ENCODE measurements at regions of chr20 and their contacts with region 1.

Region 1: DNA sequence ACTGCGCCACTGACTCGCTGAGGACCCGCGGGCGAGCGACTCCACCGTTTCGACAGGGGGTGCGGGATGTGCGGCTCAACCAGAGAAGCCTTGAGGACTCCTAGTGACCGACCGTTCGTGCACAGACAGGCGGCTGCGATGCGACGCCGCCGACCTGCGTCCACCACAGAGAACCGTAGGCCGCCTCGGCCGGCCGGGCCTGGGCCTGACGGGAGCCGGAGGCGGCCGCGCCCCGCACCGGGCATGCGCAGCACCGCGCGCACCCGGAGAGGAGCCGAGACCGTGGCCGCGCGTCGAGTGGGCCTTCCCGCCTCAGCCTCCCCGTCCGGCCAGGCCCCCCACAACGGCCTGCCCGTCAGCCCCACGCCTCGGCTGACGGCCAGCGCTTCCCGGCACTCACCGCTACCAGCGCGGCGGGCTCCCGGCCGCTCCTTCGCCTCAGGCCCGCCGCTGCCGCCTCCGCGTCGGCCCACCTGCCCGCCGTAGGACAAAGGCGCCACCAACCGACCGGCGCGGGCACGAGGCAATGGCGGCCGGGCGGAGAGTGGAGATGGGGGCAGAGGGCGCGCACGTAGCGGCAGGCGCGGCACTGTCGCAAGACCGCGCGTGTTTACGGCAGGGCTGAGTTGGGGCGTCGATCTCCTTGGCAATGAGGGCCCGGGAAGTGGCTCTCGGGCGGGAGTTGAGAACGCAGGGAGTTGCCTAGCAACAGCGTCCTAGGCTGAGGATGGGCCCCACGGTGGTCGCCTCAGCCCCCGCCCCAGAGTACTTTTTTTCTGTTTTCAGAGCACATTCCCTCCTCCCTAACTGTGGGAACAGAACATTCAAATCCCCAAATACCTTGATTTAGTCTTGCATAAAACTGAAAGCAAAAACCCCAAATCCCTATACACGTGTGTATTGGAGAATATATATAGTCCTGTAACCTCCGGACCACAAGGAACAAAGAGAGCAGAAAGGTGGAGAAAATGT is at the start of gene NCOA5:
- DNase-seq: peak; percentile 94
- H3K4me3 ChIP-seq: peak within 1 kb of the TSS; percentile 70 to 80 (median 77)
- H3K27ac ChIP-seq: peak within 1 kb of the TSS; percentile 83
- H3K4me1 ChIP-seq: peaks cover 26% of the 10 kb centered on the region
- H3K27me3 ChIP-seq: peaks cover 0 to 2% of the 10 kb centered on the region in 2 experiments
- CTCF ChIP-seq: peak in 1 of 2 donors; percentile 15
- POLR2A ChIP-seq: peak; percentile 85
- total RNA-seq, gene NCOA5: 34.2 and 39.5 TPM in 2 replicates

Region 2: GRCh38 chr20:45812157-45813020 is 277.3 kb before region 1 on chr20 and contains the start of gene UBE2C:
- CTCF ChIA-PET with region 1: no interaction called
- POLR2A ChIA-PET with region 1: no interaction called
- dilution Hi-C with region 1: no loop called
- intact Hi-C with region 1: loop called (anchors 10 kb)
- DNase-seq: peak; percentile 100
- H3K4me3 ChIP-seq: peak within 1 kb of the TSS; percentile 59 to 96 (median 90)
- H3K27ac ChIP-seq: peak within 1 kb of the TSS; percentile 41
- H3K4me1 ChIP-seq: peaks cover 16% of the 10 kb centered on the region
- H3K27me3 ChIP-seq: no peaks in the 10 kb centered on the region
- CTCF ChIP-seq: no peak
- POLR2A ChIP-seq: peak; percentile 50
- total RNA-seq, gene UBE2C: 108 and 129 TPM in 2 replicates

Region 3: DNA sequence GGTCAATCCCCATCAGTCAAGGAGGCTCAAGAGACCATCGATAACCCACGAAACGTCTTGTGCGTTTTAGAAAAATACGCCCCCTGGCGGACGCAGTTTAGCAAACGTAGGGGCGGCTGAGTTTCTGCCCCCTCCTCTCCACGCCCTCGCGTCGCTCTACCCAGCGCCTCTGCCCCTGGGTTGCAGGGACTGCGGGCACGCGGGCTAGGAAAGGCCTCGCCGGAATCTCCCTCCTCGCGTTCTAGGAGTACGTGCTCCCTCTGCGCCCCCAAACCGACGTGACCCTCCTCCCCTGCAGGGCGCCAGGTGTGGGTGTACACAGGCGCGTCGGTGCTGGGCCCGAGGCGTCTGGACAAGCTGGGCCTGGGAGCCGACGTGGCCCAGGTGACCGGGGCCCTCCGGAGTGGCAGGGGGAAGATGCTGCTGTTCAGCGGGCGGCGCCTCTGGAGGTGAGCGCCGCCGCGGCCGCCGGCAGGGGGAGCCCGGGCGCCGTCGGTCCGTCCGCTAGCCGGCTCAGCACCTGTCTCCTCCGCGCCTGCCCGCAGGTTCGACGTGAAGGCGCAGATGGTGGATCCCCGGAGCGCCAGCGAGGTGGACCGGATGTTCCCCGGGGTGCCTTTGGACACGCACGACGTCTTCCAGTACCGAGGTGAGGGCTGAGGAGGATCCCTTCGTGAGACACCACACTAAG is 75.7 kb before region 1 on chr20:
- CTCF ChIA-PET with region 1: interaction called, 24 read pairs
- POLR2A ChIA-PET with region 1: no interaction called
- dilution Hi-C with region 1: no loop called
- intact Hi-C with region 1: loop called (anchors 2 kb)
- DNase-seq: peak; percentile 31
- H3K4me3 ChIP-seq: no peak overlapping the region
- H3K27ac ChIP-seq: no peak overlapping the region
- H3K4me1 ChIP-seq: no peaks in the 10 kb centered on the region
- H3K27me3 ChIP-seq: peaks cover 39 to 46% of the 10 kb centered on the region in 2 experiments
- CTCF ChIP-seq: peak; percentile 74 to 85
- POLR2A ChIP-seq: no peak

Region 4: DNA sequence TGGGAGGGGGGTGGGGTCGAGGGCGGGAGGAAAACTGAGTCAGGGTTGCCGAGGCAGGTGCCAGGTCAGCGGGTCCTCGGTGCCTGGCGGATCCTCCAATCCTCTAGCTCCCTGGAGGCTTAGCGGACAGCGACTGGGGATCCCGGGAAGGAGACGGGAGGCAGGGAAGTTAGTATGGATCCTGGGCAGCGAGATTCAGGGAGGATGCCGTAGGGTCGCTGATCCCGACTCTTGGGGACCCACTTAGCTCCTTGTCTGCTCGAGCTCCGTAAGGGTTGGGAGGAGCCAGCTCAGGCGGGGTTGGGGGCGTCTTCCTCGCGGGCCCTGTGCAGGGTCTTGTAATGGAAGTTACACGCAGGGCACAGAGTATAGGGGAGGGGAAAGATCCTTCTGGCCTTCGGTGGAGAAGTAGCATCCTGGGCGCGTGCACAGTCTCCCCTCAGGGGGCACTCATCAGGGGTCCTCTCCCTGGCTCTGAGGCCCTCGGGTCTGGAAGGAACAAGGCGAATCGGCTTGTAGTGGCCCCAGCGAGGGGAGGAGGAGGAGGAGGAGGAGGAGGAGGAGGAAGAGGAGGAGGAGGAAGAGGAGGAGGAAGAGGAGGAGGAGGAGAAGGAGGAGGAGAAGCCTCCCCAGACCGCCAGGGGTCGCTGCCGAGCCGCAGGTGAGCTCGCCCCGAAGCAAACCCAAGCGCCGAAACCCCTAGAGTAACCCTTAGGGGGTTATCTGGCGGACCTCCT is 67.1 kb before region 1 on chr20:
- CTCF ChIA-PET with region 1: interaction called, 7 read pairs
- POLR2A ChIA-PET with region 1: no interaction called
- dilution Hi-C with region 1: no loop called
- intact Hi-C with region 1: loop called (anchors 1 kb)
- DNase-seq: no peak
- H3K4me3 ChIP-seq: no peak overlapping the region
- H3K27ac ChIP-seq: no peak overlapping the region
- H3K4me1 ChIP-seq: no peaks in the 10 kb centered on the region
- H3K27me3 ChIP-seq: peaks cover 10 to 22% of the 10 kb centered on the region in 2 experiments
- CTCF ChIP-seq: peak; percentile 53 to 77
- POLR2A ChIP-seq: no peak

Region 5: DNA sequence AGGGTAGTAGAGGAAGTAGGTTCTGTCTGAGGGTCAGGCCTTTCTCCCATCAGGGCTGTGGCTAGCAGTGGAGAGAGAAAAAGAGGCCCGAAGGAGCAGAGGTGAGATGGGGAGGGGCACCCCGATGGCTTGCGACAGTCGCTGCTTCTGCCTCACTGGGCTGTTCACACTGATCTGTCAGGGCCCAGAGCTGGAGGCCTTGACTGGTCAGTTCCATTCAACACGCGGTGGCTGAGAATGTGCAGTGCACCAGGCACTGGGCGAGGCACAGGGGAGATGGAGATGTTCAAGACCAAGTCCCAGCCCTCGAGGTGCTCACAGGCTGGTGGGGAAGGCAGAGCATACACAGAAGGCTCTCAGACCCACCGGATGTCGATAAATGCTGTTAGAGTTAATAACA is 39.3 kb before region 1 on chr20:
- CTCF ChIA-PET with region 1: no interaction called
- POLR2A ChIA-PET with region 1: no interaction called
- dilution Hi-C with region 1: no loop called
- intact Hi-C with region 1: no loop called
- DNase-seq: no peak
- H3K4me3 ChIP-seq: no peak overlapping the region
- H3K27ac ChIP-seq: no peak overlapping the region
- H3K4me1 ChIP-seq: no peaks in the 10 kb centered on the region
- H3K27me3 ChIP-seq: no peaks in the 10 kb centered on the region
- CTCF ChIP-seq: no peak
- POLR2A ChIP-seq: no peak

Region 6: GRCh38 chr20:46078954-46079353 is 10.7 kb before region 1 on chr20:
- CTCF ChIA-PET with region 1: interaction called, 10 read pairs
- POLR2A ChIA-PET with region 1: no interaction called
- dilution Hi-C with region 1: no loop called
- intact Hi-C with region 1: no loop called
- DNase-seq: no peak
- H3K4me3 ChIP-seq: no peak overlapping the region
- H3K27ac ChIP-seq: no peak overlapping the region
- H3K4me1 ChIP-seq: no peaks in the 10 kb centered on the region
- H3K27me3 ChIP-seq: no peaks in the 10 kb centered on the region
- CTCF ChIP-seq: no peak
- POLR2A ChIP-seq: no peak

Region 7: GRCh38 chr20:46100988-46101387 is 11.3 kb after region 1 on chr20:
- CTCF ChIA-PET with region 1: no interaction called
- POLR2A ChIA-PET with region 1: no interaction called
- dilution Hi-C with region 1: no loop called
- intact Hi-C with region 1: no loop called
- DNase-seq: no peak
- H3K4me3 ChIP-seq: no peak overlapping the region
- H3K27ac ChIP-seq: no peak overlapping the region
- H3K4me1 ChIP-seq: no peaks in the 10 kb centered on the region
- H3K27me3 ChIP-seq: peaks cover 24 to 59% of the 10 kb centered on the region in 2 experiments
- CTCF ChIP-seq: no peak
- POLR2A ChIP-seq: no peak

Region 8: GRCh38 chr20:46117704-46118467 is 28.2 kb after region 1 on chr20 and contains the start of gene CD40:
- CTCF ChIA-PET with region 1: no interaction called
- POLR2A ChIA-PET with region 1: no interaction called
- dilution Hi-C with region 1: no loop called
- intact Hi-C with region 1: loop called (anchors 2 kb)
- DNase-seq: peak; percentile 84
- H3K4me3 ChIP-seq: peak within 1 kb of the TSS in 2 of 3 experiments; percentile 9 to 54
- H3K27ac ChIP-seq: no peak within 1 kb of the TSS
- H3K4me1 ChIP-seq: peaks cover 28% of the 10 kb centered on the region
- H3K27me3 ChIP-seq: peaks cover 2 to 8% of the 10 kb centered on the region in 2 experiments
- CTCF ChIP-seq: no peak
- POLR2A ChIP-seq: peak; percentile 89
- total RNA-seq, gene CD40: 33.1 and 36.6 TPM in 2 replicates

Region 9: DNA sequence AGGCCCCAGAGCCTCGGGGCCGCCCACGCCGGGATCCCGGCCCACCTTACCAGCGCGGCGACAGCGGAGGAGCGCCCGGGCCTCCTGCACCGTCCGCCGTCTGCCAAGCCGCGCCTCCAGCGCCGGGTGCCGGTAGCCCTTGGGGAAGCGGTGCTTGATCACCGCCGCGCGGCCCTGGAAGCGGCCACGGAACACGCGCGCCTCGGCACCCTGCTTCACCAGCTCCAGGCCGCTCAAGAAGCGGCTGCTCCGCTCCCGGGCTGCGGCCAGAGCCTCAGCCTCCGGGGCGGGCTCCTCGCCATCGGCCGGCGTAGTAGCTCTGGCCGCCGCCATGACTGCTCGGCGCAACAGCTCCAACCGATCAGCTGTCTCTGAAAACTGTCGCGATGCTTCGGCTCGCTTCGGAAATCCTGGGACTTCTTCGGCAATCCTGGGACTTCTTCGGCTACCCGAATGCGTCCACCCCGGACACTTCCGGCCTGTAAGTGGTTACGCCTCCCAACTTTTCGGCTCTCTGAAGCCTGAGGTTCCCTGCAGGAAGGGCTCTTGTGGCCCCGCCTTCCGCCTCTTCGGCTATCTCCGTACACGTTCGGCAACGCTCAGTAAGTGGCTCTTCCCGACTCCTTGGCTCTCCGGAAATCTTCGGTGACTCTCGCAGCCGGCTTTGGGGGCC is 599.5 kb after region 1 on chr20 and contains the start of gene TP53RK:
- CTCF ChIA-PET with region 1: no interaction called
- POLR2A ChIA-PET with region 1: no interaction called
- dilution Hi-C with region 1: no loop called
- intact Hi-C with region 1: loop called (anchors 2 kb)
- DNase-seq: peak; percentile 100
- H3K4me3 ChIP-seq: peak within 1 kb of the TSS; percentile 62 to 91 (median 90)
- H3K27ac ChIP-seq: peak within 1 kb of the TSS; percentile 55
- H3K4me1 ChIP-seq: peaks cover 16% of the 10 kb centered on the region
- H3K27me3 ChIP-seq: no peaks in the 10 kb centered on the region
- CTCF ChIP-seq: peak; percentile 7 to 33
- POLR2A ChIP-seq: peak; percentile 92
- total RNA-seq, gene TP53RK: 11.8 and 13.1 TPM in 2 replicates

Measured in endothelial cell of umbilical vein (primary cell).